PC-9 (cell line): ENCODE measurements at regions of chr1 and their contacts with region 1.

Region 1: GRCh38 chr1:32876341-32877210 is 5.9 kb upstream of the FNDC5 start:
- DNase-seq: peak in 1 of 2 experiments; percentile 61
- H3K4me3 ChIP-seq: no peak overlapping the region
- H3K27ac ChIP-seq: no peak overlapping the region
- H3K4me1 ChIP-seq: no peaks in the 10 kb centered on the region
- H3K27me3 ChIP-seq: peaks cover 6% of the 10 kb centered on the region; the same call in 1 of the 2 replicates
- CTCF ChIP-seq: peak; percentile 91

Region 2: DNA sequence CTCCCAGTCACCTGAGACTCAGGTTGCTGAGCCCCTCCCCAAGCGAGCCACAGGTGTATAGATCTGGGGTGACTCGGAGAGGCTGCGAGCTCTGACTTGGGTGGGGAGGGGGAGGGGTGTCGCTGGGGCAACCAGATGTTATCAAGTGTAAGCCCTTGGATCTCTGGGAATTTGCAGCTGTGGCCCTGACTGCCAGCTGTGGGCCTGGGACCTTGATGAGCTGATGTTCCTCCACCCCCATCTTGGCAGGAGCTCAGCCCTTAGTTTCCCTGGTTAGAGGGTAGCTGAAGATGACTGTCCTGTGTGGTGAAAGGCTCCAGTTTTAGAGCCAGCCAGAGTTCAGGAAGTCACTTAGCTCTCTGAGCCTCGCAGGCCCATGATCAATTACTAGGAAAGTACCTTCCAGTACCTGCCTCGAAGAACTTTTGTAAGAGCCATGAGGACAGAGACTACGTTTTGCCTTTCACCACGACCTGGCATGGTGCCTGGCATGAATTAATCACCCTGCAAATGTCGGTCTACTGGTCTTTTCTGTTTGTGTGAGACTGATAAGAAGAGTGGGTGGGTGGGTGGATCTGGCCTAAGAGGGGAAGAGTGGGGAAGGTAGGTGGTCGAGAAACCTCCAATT is 115.2 kb before region 1 on chr1:
- CTCF ChIA-PET with region 1: no interaction called
- POLR2A ChIA-PET with region 1: no interaction called
- intact Hi-C with region 1: no loop called
- DNase-seq: peak; percentile 84 to 96
- H3K4me3 ChIP-seq: peak overlapping the region; percentile 51
- H3K27ac ChIP-seq: peak overlapping the region; percentile 99
- H3K4me1 ChIP-seq: peaks cover 96% of the 10 kb centered on the region
- H3K27me3 ChIP-seq: no peaks in the 10 kb centered on the region
- CTCF ChIP-seq: no peak

Region 3: DNA sequence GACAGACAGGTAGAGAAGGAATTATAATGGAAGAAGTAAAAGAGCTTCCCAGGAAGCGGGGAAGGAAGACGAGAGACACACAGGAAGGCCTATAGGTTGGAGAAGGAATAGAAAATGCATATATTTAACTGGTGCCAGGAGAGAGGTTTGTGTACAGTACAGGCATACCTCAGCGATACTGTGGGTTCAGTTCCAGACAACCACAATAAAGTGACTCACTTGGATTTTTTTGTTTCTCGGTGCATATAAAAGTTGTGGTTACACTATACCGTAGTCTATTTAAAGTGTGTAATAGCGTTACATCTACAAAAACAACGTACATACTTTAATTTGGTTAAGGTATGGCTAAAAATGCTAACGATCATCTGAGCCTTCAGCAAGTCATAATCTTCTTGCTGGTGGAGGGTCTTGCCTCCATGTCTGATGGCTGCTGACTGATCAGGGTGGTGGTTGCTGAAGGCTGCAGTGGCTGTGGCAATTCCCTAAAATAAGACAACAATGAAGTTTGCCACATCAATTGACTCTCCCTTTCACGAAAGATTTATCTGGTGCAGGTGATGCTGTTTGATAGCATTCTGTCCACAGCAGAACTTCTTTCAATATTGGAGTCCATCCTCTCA is 75.4 kb before region 1 on chr1:
- CTCF ChIA-PET with region 1: no interaction called
- POLR2A ChIA-PET with region 1: no interaction called
- intact Hi-C with region 1: no loop called
- DNase-seq: peak in 1 of 2 experiments; percentile 46
- H3K4me3 ChIP-seq: no peak overlapping the region
- H3K27ac ChIP-seq: peak overlapping the region; percentile 85
- H3K4me1 ChIP-seq: peaks cover 53% of the 10 kb centered on the region
- H3K27me3 ChIP-seq: no peaks in the 10 kb centered on the region
- CTCF ChIP-seq: no peak

Region 4: DNA sequence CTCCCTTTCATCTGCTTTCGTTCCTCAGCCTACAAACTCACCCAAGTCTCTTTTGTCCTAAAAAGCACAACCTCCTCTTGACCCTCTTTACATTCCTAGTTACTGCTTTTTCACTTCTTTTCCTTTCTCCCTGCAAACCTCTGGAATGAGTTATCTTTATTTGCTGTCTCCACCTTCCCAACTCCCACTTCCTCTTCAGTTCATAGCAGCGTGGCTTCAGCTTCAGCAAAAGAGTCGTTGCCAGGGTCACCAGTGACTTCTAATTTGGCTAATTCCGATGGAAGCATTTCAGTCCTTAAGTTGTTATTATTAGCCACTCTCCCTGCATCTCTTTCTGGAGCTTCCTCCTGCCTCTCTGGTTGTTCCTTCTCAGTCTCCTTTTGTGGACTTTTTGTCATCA is 30.9 kb after region 1 on chr1:
- CTCF ChIA-PET with region 1: no interaction called
- POLR2A ChIA-PET with region 1: no interaction called
- intact Hi-C with region 1: no loop called
- DNase-seq: no peak
- H3K4me3 ChIP-seq: no peak overlapping the region
- H3K27ac ChIP-seq: no peak overlapping the region
- H3K4me1 ChIP-seq: no peaks in the 10 kb centered on the region
- H3K27me3 ChIP-seq: no peaks in the 10 kb centered on the region
- CTCF ChIP-seq: no peak

Region 5: DNA sequence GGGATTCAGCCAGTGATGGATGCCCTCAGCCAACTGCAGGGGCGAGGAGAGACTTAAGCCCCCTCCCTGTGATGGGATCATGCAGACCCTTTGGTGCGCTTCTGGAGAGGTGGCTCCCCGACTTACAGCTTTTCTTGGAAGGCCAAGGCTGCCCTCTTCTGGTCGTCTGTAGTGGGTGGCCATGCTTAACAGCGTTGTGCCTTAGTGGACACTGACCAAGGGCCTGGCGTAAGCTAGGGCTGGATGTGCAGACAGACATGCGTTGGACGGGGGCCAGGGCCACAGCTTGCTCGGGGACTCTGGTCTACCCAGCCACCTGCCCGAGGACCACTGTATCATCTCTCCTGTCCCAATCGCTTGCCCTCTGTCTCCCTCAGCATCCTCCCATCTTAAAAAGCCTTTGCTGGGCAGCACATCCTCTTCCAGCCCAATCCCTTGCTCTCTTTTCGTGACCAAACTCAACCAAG is 209.8 kb after region 1 on chr1:
- CTCF ChIA-PET with region 1: interaction called, 8 read pairs
- POLR2A ChIA-PET with region 1: no interaction called
- intact Hi-C with region 1: loop called (anchors 1 kb)
- DNase-seq: peak; percentile 57 to 67
- H3K4me3 ChIP-seq: no peak overlapping the region
- H3K27ac ChIP-seq: no peak overlapping the region
- H3K4me1 ChIP-seq: peaks cover 8% of the 10 kb centered on the region
- H3K27me3 ChIP-seq: no peaks in the 10 kb centered on the region
- CTCF ChIP-seq: peak; percentile 82

Region 6: GRCh38 chr1:33152685-33153432 is 276.3 kb after region 1 on chr1:
- CTCF ChIA-PET with region 1: no interaction called
- POLR2A ChIA-PET with region 1: no interaction called
- intact Hi-C with region 1: no loop called
- DNase-seq: no peak
- H3K4me3 ChIP-seq: no peak overlapping the region
- H3K27ac ChIP-seq: no peak overlapping the region
- H3K4me1 ChIP-seq: peaks cover 51% of the 10 kb centered on the region
- H3K27me3 ChIP-seq: no peaks in the 10 kb centered on the region
- CTCF ChIP-seq: no peak

Region 7: GRCh38 chr1:33472349-33472980 is 595.9 kb after region 1 on chr1 and contains the start of gene ZSCAN20:
- CTCF ChIA-PET with region 1: no interaction called
- POLR2A ChIA-PET with region 1: no interaction called
- intact Hi-C with region 1: loop called (anchors 10 kb)
- DNase-seq: peak; percentile 92 to 96
- H3K4me3 ChIP-seq: peak within 1 kb of the TSS; percentile 66
- H3K27ac ChIP-seq: no peak within 1 kb of the TSS
- H3K4me1 ChIP-seq: peaks cover 10% of the 10 kb centered on the region
- H3K27me3 ChIP-seq: no peaks in the 10 kb centered on the region
- CTCF ChIP-seq: no peak
- total RNA-seq, gene ZSCAN20: 6.0 and 6.4 TPM in 2 replicates